ENCODE measurements at regions of chr3 and their contacts with region 1.

Region 1: GRCh38 chr3:12984023-12984823 is 89.0 kb downstream of the IQSEC1 start:
- DNase-seq: peak; percentile 78
- H3K4me3 ChIP-seq: no peak overlapping the region
- H3K27ac ChIP-seq: no peak overlapping the region
- H3K4me1 ChIP-seq: no peaks in the 10 kb centered on the region
- H3K27me3 ChIP-seq: no peaks in the 10 kb centered on the region
- CTCF ChIP-seq: peak; percentile 57 to 73 (median 68)
- EP300 ChIP-seq: no peak
- POLR2A ChIP-seq: no peak

Region 2: GRCh38 chr3:12934431-12934830 is 49.8 kb before region 1 on chr3:
- in situ Hi-C with region 1: no loop called
- intact Hi-C with region 1: loop called (anchors 10 kb)
- DNase-seq: no peak
- H3K4me3 ChIP-seq: no peak overlapping the region
- H3K27ac ChIP-seq: peak overlapping the region in 2 of 4 donors; percentile 28 to 63
- H3K4me1 ChIP-seq: peaks cover 6 to 25% (median 23%) of the 10 kb centered on the region in 4 donors
- H3K27me3 ChIP-seq: no peaks in the 10 kb centered on the region
- CTCF ChIP-seq: no peak
- EP300 ChIP-seq: no peak
- POLR2A ChIP-seq: no peak

Region 3: DNA sequence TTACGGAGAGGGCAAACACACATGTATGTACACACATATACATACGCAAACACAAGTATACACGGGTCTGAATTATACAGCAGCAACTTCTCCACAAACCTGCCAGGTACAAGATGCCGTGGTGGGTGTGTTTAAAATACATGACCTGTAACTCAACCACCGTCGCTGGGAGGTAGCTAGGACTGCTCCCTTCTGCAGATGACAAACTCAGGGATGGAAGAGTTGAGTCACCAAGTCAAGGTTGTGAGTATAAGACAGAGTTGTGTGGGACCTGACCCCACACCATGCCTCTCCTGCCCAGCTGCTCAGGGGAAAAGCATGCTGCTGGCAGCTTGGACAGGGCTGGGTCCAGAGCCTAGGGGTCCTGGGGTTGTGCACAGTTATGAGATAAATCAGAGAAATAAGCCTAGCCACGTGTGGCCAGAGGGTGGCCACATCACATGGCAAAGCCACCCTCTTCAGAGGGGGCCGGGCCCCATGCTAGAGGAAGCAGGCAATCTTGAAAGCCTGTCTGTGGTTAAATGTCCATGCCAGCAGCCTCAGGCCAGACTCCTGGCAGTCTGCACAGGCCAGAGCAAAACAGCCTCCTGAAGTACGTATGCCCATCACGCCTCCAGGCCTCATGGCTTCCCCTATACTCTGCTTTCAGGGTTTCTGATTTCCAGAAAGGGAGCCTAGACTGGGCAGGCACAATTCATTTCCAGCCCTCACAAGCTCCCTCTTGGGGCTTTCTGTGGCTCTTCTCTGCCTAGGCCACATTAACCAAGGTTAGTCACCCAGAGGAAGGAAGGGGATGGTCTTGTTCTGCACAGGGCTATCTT is 35.1 kb before region 1 on chr3:
- in situ Hi-C with region 1: no loop called
- intact Hi-C with region 1: no loop called
- DNase-seq: peak; percentile 24
- H3K4me3 ChIP-seq: no peak overlapping the region
- H3K27ac ChIP-seq: no peak overlapping the region
- H3K4me1 ChIP-seq: peaks cover 13 to 35% (median 24%) of the 10 kb centered on the region in 4 donors
- H3K27me3 ChIP-seq: no peaks in the 10 kb centered on the region
- CTCF ChIP-seq: no peak
- EP300 ChIP-seq: no peak
- POLR2A ChIP-seq: no peak

Region 4: DNA sequence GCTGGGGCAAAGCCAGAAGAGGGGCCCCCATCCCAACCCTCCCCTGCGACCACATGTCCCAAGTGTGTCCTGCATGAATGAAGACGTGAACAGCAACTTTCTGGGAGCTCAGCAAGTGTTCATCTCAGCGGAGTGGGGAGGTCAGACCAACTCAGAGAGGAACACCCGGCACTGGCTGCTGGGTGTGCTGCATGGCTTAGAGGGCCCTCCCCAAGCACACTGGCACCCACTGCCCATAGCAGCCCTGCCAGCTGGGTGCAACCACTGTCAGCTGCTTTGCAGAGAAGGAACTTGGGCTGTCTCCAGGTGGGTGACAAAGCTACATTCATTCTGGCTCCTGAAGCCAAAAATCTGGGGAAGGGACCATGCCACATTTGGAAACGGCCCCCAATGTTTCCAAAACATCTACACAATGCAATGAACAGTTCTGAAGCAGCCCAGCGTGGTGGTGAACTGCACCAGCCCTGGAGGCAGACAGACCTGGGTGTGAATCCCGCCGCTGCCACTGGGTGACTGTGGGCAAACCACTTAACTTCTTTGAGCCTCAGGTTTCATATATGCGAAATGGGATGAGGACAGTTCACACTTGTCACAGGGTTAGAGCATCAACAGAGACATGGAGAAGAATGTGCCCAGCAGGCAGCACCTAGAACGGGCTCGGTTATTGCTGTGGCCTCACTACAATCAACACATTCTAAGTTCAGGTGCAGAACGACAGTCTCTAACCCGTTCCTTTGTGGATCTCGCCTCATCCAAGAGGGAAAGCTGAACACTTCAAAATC is 290.5 kb after region 1 on chr3:
- in situ Hi-C with region 1: no loop called
- intact Hi-C with region 1: no loop called
- DNase-seq: no peak
- H3K4me3 ChIP-seq: no peak overlapping the region
- H3K27ac ChIP-seq: no peak overlapping the region
- H3K4me1 ChIP-seq: no peaks in the 10 kb centered on the region
- H3K27me3 ChIP-seq: peaks cover 13% of the 10 kb centered on the region
- CTCF ChIP-seq: no peak
- EP300 ChIP-seq: no peak
- POLR2A ChIP-seq: no peak

Measured in transverse colon (tissue), 4 donors.